A549 (cell line): ENCODE measurements at regions of chr14 and their contacts with region 1.

Region 1: DNA sequence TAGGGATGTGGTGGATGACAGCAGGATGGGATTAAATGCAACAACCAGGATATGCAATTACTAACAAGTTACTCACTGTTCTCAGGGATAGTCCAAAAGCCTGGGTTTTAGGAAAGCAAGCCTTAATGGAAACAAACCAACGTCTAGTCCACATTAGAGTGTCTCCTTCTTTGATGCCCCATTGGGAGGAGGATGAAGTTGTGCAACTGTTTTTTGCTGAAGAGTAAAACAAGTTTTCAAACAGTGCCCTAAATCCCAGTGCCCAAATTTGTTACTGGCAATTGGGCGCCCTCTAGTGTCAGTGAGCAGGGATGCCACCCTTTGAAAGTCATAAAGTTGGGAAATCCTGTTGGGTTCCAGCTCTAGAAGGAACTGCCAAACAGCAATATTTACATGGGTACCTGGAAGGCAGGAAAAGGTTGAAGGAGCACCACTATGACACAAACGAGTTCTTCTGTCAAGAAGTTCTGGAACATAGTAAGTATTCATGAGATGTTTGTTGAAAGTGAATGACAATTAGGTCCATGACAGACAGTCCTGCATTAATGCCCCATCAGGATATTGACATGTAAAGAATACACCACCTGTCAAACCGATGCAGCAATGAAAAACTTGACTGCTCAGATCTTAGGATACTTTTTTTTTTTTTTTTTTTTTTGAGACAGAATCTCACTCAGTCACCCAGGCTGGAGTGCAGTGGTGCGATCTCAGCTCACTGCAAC is 11.1 kb upstream of the DPF3 start:
- DNase-seq: peak; percentile 69 to 73
- ATAC-seq: peak; percentile 67 to 86
- H3K4me3 ChIP-seq: no peak overlapping the region
- H3K27ac ChIP-seq: no peak overlapping the region
- H3K4me1 ChIP-seq: peaks cover 15% of the 10 kb centered on the region; the same call in 1 of the 3 replicates
- CTCF ChIP-seq: peak; percentile 96
- EP300 ChIP-seq: no peak
- POLR2A ChIP-seq: no peak
- RAD21 ChIP-seq: peak; percentile 95 to 97

Region 2: DNA sequence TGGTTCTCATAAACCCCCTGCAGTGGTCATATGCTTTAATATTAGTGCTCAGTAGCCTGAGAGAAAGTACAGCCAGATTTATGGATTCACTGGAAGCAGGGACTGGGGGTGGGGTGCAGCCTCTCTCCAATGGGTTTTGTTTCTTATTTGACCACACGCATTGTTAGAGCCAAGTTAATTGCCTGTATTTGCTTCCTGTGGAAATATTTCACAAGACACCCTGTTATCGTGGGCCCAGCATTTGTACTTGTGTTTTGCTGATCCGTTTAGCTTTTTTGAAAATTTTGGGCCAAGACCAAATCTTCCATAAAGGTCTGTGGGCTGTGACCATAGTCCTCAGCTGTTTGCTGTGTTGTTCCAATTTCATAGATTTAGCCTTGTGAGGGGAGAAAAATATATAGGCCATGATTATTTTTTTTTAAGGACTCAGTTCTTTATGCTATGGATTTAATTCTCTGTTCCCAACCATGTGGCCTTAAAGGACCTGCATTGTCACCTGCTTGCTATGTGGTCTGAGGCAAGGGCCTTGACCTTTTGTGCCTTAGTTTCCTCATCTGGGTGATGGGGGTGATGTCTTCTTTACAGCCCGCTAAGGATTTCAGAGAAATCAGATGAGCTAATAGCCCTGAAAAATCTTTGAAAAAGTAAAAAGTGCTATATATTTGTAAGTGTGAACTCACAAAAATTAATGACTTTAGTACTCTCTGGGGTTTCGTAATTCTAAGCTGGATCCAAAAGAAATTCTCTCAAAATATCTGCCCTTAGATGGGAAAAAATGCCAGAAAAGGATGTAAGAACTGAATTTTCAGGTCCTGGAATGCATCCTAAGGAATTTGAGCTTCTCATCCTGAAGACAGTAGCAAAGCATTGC is 381.3 kb before region 1 on chr14:
- CTCF ChIA-PET with region 1: interaction called, 480 read pairs
- POLR2A ChIA-PET with region 1: no interaction called
- DNase-seq: no peak
- ATAC-seq: no peak
- H3K4me3 ChIP-seq: no peak overlapping the region
- H3K27ac ChIP-seq: no peak overlapping the region
- H3K4me1 ChIP-seq: no peaks in the 10 kb centered on the region
- CTCF ChIP-seq: no peak
- EP300 ChIP-seq: no peak
- POLR2A ChIP-seq: no peak
- RAD21 ChIP-seq: no peak

Region 3: DNA sequence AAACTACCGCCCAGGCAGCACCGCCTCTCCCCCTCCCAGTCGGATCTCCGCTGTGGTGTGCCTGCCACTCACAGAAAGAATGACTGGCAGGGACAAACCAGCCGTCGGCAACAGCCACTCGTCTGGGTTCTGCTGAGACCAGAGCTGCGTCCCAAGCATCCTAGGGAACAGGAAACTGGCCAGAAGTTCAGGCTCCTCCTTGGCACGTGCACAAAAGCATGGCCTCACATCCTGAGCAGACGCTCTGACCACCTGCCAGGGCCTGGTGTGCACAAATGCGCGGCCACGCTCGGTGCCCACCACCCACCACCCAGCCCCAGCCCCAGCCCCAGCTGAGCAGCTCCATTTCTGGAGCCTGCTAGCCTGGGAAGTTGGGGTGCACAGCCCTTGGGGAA is 225.9 kb before region 1 on chr14:
- CTCF ChIA-PET with region 1: interaction called, 12 read pairs
- POLR2A ChIA-PET with region 1: no interaction called
- DNase-seq: no peak
- ATAC-seq: no peak
- H3K4me3 ChIP-seq: no peak overlapping the region
- H3K27ac ChIP-seq: no peak overlapping the region
- H3K4me1 ChIP-seq: no peaks in the 10 kb centered on the region
- CTCF ChIP-seq: no peak
- EP300 ChIP-seq: no peak
- POLR2A ChIP-seq: no peak
- RAD21 ChIP-seq: no peak

Region 4: GRCh38 chr14:72893636-72894321 is 11.2 kb before region 1 on chr14 and contains the start of gene DPF3:
- CTCF ChIA-PET with region 1: interaction called, 36 read pairs
- POLR2A ChIA-PET with region 1: interaction called, 3 read pairs
- DNase-seq: peak; percentile 90 to 97
- ATAC-seq: peak; percentile 95 to 99
- H3K4me3 ChIP-seq: peak within 1 kb of the TSS; percentile 60
- H3K27ac ChIP-seq: peak within 1 kb of the TSS in 1 of 2 experiments; percentile 18; a peak in 2 of 6 replicates
- H3K4me1 ChIP-seq: peaks cover 18% of the 10 kb centered on the region
- CTCF ChIP-seq: no peak
- EP300 ChIP-seq: no peak
- POLR2A ChIP-seq: no peak
- RAD21 ChIP-seq: no peak
- polyA plus RNA-seq, gene DPF3: 0.05 and 0.28 TPM in 2 replicates

Region 5: GRCh38 chr14:72926292-72927028 is 21.5 kb after region 1 on chr14 and contains the start of gene DCAF4:
- CTCF ChIA-PET with region 1: interaction called, 14 read pairs
- POLR2A ChIA-PET with region 1: interaction called, 3 read pairs
- DNase-seq: peak; percentile 98 to 99
- ATAC-seq: peak; percentile 96 to 97
- H3K4me3 ChIP-seq: peak within 1 kb of the TSS; percentile 67
- H3K27ac ChIP-seq: peak within 1 kb of the TSS; percentile 71 to 82
- H3K4me1 ChIP-seq: peaks cover 5% of the 10 kb centered on the region; the same call in 1 of the 3 replicates
- CTCF ChIP-seq: no peak
- EP300 ChIP-seq: no peak
- POLR2A ChIP-seq: peak; percentile 27; the same call in 1 of the 2 replicates
- RAD21 ChIP-seq: no peak
- polyA plus RNA-seq, gene DCAF4: 21.0 and 22.4 TPM in 2 replicates

Region 6: DNA sequence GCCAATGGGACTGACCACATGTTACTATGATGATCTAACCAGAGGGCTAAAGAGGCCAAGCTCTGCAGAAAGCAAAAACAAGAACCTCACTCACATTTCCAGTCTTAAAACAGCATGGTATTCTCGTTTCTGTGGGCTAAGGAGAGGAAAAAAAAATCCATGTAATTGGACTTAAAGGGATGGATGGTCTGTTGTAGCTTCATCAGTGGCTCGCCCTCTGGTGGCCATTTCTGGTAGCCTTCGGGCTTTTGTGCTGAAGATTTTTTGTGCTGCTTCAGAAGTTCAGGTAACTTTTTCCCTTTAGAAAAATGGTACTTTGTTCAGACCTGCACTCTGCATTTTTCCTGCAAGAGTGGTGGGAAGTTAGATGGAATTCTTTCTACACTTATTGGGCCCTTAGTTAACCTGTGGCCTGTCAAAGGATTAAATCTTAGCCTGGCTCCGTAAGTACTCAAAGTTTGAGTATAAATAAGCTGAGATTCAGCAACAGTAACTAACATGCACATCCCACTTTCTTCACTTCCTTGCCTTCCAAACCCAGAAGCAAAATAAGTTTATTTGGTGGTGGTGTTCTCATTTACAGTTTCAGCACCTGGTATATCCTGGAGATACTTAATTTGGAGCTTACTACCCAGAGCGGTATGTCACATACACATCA is 43.6 kb after region 1 on chr14:
- CTCF ChIA-PET with region 1: interaction called, 20 read pairs
- POLR2A ChIA-PET with region 1: no interaction called
- DNase-seq: peak; percentile 50 to 58
- ATAC-seq: peak; percentile 50 to 79; a peak in 3 of 6 replicates
- H3K4me3 ChIP-seq: no peak overlapping the region
- H3K27ac ChIP-seq: no peak overlapping the region
- H3K4me1 ChIP-seq: no peaks in the 10 kb centered on the region
- CTCF ChIP-seq: peak; percentile 86
- EP300 ChIP-seq: no peak
- POLR2A ChIP-seq: no peak
- RAD21 ChIP-seq: peak; percentile 62 to 67